Astrocyte of the cerebellum (primary cell): ENCODE measurements at regions of chr11 and their contacts with region 1.

Region 1: DNA sequence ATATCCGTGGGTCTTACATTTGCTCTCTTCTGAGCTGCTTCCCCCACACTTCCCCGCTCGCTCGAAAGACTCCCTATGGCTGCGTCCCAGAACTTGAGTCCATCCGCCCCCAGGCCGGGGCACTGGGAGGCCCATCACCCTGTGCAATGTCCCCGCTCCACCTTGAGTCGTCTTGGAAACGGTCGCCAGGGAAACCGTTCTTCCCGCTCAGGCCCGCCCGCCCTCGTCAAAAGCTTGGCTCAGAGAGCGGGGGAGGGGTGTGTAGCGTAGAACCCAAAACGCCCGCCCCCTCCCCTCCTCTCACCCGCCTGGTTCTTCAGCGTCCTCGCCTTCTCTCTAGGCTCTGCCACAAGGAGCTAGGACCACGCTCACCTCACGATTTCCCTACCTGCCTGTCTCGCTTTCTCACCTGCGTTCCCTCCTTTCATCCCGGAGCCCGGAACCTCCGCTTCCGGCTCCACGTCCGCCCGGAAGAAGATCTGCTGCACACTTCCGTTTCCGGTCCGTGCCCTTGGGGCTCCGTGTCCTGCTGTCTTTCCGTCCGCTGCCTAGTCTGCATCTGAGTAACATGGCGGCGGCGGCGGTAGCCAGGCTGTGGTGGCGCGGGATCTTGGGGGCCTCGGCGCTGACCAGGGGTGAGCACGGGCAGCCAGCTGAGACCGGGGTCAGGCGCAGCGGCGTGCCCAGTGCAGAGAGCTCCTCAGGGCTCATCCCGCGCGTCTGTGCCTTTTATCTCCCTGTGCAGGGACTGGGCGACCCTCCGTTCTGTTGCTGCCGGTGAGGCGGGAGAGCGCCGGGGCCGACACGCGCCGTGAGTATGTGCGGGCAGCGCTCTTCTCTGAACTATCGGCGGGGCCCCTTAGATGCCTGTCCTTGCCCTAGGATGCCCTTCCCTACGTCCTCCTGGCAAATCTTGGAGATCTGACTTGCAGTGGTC is at the starts of genes KBTBD4 and NDUFS3:
- DNase-seq: peak; percentile 78
- H3K4me3 ChIP-seq: peak within 1 kb of the TSS; percentile 86
- CTCF ChIP-seq: no peak

Region 2: GRCh38 chr11:47611348-47611794 is 32.6 kb after region 1 on chr11:
- in situ Hi-C with region 1: loop called (anchors 5 kb)
- DNase-seq: no peak
- H3K4me3 ChIP-seq: no peak overlapping the region
- CTCF ChIP-seq: no peak

Region 3: GRCh38 chr11:47672283-47672730 is 93.5 kb after region 1 on chr11:
- in situ Hi-C with region 1: no loop called
- DNase-seq: no peak
- H3K4me3 ChIP-seq: no peak overlapping the region
- CTCF ChIP-seq: no peak